GM12878 (cell line): ENCODE measurements at regions of chr1 and their contacts with region 1.

Region 1: DNA sequence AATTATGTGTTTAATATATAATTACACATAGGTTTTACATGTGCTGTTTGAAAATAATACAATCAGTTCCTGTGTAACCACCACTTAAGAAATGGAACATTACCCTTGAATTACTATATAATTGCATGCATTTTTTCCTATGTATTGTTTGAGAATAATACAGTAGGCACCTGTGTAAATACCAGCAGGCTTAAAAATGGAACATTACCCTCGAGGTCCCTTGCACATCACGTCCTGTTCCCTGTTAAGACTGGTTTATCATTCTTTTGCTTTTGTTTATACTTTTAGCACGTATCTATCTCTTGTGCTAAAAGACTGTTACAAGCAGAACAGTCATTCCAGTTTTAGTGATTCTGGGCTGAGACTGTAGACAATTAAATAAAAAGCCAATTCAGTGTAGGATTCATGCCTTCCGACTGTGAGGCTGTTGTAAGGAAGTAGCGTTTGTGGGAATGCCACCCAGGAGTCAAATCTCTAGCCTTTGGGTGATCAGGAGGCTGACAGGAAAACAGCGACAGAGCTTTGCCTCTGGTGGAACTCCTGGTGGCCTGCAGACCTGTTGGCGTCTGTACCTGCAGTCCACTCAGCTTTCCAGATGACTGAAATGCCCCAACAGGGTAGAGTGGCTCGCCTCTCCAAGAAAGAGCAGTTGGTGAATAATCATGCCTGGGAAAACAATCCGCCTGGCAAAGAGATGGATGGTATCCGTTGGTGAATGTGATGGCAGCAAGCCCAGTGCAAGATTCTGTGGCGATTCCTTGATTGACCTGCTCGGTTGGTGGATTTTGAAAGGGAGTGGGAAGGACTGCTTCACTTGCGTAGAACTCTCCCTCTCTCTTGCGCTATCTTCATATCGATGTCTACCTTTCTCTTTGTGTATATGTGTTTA is 58.0 kb downstream of the DISC1 start:
- DNase-seq: no peak
- ATAC-seq: no peak
- H3K4me3 ChIP-seq: no peak overlapping the region
- H3K27ac ChIP-seq: no peak overlapping the region
- H3K4me1 ChIP-seq: no peaks in the 10 kb centered on the region
- H3K27me3 ChIP-seq: no peaks in the 10 kb centered on the region
- CTCF ChIP-seq: no peak
- EP300 ChIP-seq: no peak
- POLR2A ChIP-seq: no peak
- RAD21 ChIP-seq: no peak

Region 2: GRCh38 chr1:231893400-231894102 is 209.0 kb after region 1 on chr1:
- CTCF ChIA-PET with region 1: no interaction called
- POLR2A ChIA-PET with region 1: no interaction called
- RAD21 ChIA-PET with region 1: no interaction called
- SMC1A ChIA-PET with region 1: no interaction called
- in situ Hi-C with region 1: no loop called
- intact Hi-C with region 1: loop called (anchors 5 kb)
- DNase-seq: no peak
- ATAC-seq: no peak
- H3K4me3 ChIP-seq: no peak overlapping the region
- H3K27ac ChIP-seq: no peak overlapping the region
- H3K4me1 ChIP-seq: no peaks in the 10 kb centered on the region
- H3K27me3 ChIP-seq: peaks cover 0 to 4% of the 10 kb centered on the region in 2 experiments; a peak in 1 of 4 replicates
- CTCF ChIP-seq: no peak
- EP300 ChIP-seq: no peak
- POLR2A ChIP-seq: no peak
- RAD21 ChIP-seq: no peak